PC-9 (cell line): ENCODE measurements at regions of chr18 and their contacts with region 1.

Region 1: GRCh38 chr18:26307189-26307773 is 81.0 kb downstream of the TAF4B start:
- DNase-seq: peak; percentile 5 to 37
- H3K4me3 ChIP-seq: no peak overlapping the region
- H3K27ac ChIP-seq: no peak overlapping the region
- H3K4me1 ChIP-seq: no peaks in the 10 kb centered on the region
- H3K27me3 ChIP-seq: no peaks in the 10 kb centered on the region
- CTCF ChIP-seq: peak; percentile 74

Region 2: DNA sequence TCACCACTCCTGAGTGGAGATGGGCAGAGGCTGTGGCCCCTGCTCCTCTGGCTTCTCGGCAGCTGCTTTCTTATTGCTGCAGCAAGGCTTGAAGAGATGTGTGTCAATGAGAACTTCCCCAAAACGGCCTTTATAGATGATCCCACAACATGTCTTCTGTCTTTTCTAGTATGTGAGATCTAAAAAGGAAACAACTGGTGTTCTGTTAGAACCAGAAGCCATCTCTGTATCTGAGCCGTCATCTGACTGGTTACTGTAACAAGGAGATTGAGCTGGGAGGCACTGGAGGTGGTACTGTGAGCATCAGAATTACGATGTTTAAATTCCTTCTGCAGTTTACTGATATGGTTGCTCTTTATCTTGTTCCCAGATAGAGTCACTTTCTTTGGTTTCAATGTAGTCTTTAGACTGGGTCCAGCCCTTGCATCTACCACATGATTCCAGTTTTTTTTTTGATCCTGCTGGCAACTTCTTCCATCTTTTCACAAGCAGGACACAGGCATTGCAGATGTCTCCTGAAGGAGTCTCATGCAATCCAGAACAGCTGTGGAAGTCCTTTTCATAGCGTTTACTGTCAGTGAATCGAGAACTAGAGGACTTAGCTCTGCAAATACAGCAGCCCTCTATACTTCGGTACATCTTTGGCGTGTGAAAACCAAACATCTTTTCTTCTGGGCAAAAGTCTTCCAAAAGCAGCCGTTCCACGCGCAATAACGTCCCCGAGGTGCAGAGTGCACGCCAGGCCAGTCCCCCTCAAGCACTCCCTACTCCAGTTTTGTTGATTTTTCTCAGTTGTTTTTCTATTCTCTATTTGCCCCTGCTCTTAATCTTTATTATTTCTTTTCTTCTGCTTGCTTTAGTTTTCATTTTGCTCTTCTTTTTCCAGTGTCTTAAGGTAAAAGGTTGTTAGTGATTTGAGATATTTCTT is 51.3 kb before region 1 on chr18:
- CTCF ChIA-PET with region 1: no interaction called
- POLR2A ChIA-PET with region 1: no interaction called
- intact Hi-C with region 1: no loop called
- DNase-seq: no peak
- H3K4me3 ChIP-seq: no peak overlapping the region
- H3K27ac ChIP-seq: no peak overlapping the region
- H3K4me1 ChIP-seq: no peaks in the 10 kb centered on the region
- H3K27me3 ChIP-seq: no peaks in the 10 kb centered on the region
- CTCF ChIP-seq: no peak

Region 3: GRCh38 chr18:26383454-26384270 is 76.4 kb after region 1 on chr18:
- CTCF ChIA-PET with region 1: no interaction called
- POLR2A ChIA-PET with region 1: no interaction called
- intact Hi-C with region 1: loop called (anchors 10 kb)
- DNase-seq: no peak
- H3K4me3 ChIP-seq: no peak overlapping the region
- H3K27ac ChIP-seq: no peak overlapping the region
- H3K4me1 ChIP-seq: peaks cover 38% of the 10 kb centered on the region
- H3K27me3 ChIP-seq: no peaks in the 10 kb centered on the region
- CTCF ChIP-seq: peak; percentile 79

Region 4: DNA sequence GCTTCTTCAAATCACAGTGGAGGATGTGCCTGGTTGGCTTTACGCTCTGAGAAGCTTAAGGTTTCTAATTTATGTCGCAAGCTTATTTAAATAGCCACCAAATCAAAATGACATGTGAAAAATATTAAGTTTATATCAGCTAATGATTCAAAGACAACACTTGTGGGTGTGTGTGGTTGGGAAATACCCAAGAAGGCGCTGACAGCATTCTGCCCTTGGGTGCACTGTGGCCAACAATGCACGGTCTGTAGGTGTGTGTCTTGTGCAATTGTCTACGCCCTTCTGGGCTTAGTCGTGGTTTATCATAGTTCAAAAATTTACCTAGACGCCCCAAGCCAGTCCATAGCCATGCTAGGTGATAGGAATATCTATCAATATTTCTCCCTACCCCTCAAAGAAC is 180.2 kb after region 1 on chr18:
- CTCF ChIA-PET with region 1: interaction called, 3 read pairs
- POLR2A ChIA-PET with region 1: no interaction called
- intact Hi-C with region 1: loop called (anchors 10 kb)
- DNase-seq: peak; percentile 58 to 93
- H3K4me3 ChIP-seq: no peak overlapping the region
- H3K27ac ChIP-seq: peak overlapping the region; percentile 83
- H3K4me1 ChIP-seq: peaks cover 63% of the 10 kb centered on the region
- H3K27me3 ChIP-seq: no peaks in the 10 kb centered on the region
- CTCF ChIP-seq: no peak

Region 5: DNA sequence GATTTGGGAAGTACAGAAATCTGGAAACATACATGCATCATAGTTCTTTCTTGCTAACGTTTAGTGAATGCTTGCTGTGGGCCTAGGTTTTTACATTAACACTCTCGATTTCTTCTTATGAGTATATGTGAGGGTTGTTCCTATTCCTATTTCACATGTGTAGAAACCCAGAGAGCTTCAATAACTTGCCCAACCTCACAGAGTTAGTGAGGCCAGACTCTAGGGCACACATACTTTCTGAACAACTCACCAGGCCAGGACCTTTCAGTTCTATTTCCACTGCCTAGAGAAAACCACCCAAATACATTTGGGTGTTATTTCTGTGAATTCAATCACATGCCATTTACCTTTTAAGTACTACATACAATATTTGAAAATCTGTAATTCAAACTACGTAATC is 249.3 kb after region 1 on chr18:
- CTCF ChIA-PET with region 1: interaction called, 10 read pairs
- POLR2A ChIA-PET with region 1: no interaction called
- intact Hi-C with region 1: no loop called
- DNase-seq: peak in 1 of 2 experiments; percentile 52
- H3K4me3 ChIP-seq: no peak overlapping the region
- H3K27ac ChIP-seq: peak overlapping the region; percentile 43; the same call in 1 of the 2 replicates
- H3K4me1 ChIP-seq: peaks cover 19% of the 10 kb centered on the region
- H3K27me3 ChIP-seq: no peaks in the 10 kb centered on the region
- CTCF ChIP-seq: no peak

Region 6: DNA sequence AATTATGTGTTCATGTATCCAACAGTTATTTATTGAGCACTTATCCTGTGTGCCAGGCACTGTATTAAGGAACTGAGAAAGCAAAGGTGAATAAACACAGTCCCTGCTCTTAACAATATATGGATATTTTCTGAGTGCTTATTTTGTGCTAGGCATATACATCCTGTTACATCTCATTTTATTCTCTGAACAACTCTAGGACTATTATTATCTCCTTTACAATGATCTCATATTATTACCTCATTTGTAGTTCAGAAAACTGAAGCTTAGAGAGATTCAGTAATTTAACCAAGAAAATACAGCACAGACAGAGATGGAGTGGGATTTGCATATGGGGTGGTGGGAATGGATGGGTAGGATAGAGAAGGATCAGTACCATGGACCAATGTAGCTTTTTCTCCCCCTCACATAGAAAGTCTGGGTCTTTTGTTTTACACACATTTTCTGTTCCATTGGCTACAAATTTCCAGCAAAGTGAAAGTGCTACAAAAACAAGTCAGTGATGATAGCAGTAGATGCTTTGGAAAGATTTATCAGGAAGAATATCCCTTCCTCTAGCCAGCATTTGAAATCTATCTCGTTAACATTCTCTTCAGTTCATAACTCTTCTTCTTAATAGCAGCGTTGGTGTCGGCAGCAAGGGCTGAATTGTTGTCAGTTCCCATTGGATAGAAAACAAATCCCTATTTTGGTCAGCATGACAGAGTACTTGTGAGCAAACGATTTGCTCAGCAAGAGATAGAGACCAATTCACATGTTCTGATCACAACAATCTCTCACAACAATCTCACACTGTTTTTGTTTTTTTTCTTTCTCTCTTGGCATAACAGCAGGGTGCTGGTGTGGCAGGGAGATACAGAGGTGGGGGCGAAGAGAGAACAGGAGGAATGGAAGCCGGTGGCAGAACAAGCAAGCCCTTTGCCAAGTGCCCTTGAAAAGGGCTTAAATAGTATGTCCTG is 343.3 kb after region 1 on chr18:
- CTCF ChIA-PET with region 1: no interaction called
- POLR2A ChIA-PET with region 1: no interaction called
- intact Hi-C with region 1: loop called (anchors 2 kb)
- DNase-seq: no peak
- H3K4me3 ChIP-seq: no peak overlapping the region
- H3K27ac ChIP-seq: no peak overlapping the region
- H3K4me1 ChIP-seq: no peaks in the 10 kb centered on the region
- H3K27me3 ChIP-seq: no peaks in the 10 kb centered on the region
- CTCF ChIP-seq: no peak

Region 7: DNA sequence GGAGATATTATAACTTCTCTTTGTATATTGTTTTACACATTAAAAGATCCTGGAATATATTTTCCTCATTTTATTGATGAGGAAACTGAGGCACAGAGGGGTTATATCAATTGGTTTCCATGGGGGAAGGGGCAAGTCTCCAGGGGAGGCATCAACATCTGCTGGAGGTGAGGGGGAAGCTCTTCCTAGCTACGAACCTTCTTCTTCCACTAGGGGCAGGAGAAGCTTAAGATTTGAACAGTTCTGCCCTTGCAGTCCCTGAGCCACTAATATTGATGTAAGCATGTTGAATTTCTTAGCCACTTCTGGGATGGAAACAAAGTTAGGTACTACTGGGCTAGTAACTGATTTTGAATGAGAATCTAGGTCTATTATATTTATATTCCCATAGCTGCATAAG is 698.3 kb after region 1 on chr18:
- CTCF ChIA-PET with region 1: no interaction called
- POLR2A ChIA-PET with region 1: no interaction called
- intact Hi-C with region 1: loop called (anchors 2 kb)
- DNase-seq: no peak
- H3K4me3 ChIP-seq: no peak overlapping the region
- H3K27ac ChIP-seq: no peak overlapping the region
- H3K4me1 ChIP-seq: no peaks in the 10 kb centered on the region
- H3K27me3 ChIP-seq: no peaks in the 10 kb centered on the region
- CTCF ChIP-seq: peak; percentile 54; the same call in 1 of the 2 replicates

Region 8: GRCh38 chr18:27599202-27599829 is 1292.0 kb after region 1 on chr18:
- CTCF ChIA-PET with region 1: no interaction called
- POLR2A ChIA-PET with region 1: no interaction called
- intact Hi-C with region 1: loop called (anchors 10 kb)
- DNase-seq: no peak
- H3K4me3 ChIP-seq: no peak overlapping the region
- H3K27ac ChIP-seq: no peak overlapping the region
- H3K4me1 ChIP-seq: no peaks in the 10 kb centered on the region
- H3K27me3 ChIP-seq: no peaks in the 10 kb centered on the region
- CTCF ChIP-seq: peak; percentile 76